Esophagus muscularis mucosa (tissue), 4 donors: ENCODE measurements at regions of chr12 and their contacts with region 1.

Region 1: DNA sequence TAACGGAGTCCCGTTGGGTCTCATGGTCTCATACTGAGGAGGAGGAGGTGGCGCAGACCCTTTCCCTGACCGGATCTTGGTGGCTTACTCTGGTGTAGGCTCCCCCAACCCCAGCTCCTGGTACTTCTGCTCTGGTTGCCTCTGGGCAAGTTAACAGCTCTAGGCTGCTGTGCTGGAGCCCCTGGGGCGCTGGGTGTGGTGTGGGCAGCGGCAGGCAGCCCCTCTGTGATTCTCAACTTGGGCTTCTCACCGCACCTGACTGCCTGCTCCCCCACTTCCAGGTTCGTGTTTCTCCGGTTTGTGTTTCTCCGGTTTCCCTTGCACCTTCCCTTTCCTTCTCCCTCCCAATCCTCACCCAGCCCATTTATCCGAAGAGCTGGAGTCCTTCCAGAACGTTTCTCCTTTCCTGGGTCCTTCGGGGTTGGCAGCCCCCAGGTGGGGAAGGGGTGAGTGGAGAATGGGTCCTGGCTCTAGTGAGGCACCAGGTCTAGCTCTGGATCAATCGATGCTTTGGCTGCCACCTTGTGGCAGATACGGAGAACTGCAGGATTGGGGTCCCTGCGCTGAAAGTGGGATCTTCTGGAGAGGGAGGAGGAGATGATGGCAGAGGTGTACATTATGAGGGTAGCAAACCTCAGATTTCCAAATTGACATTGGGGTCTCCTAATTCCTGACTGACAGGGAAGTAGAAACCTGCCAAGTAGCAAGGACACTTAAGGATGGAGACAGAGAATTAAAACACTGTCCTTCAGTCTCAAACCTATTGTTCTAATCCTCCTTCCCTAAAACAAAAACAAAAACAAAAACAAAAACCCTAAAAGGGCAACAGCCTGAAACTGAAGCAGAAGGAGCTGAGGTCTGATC is 8.3 kb downstream of the CISTR start:
- DNase-seq: no peak
- H3K4me3 ChIP-seq: no peak overlapping the region
- H3K27ac ChIP-seq: no peak overlapping the region
- H3K4me1 ChIP-seq: peaks cover 15 to 36% (median 32%) of the 10 kb centered on the region in 4 donors
- H3K27me3 ChIP-seq: peaks cover 0 to 79% (median 51%) of the 10 kb centered on the region in 4 donors
- CTCF ChIP-seq: peak in 2 of 3 experiments; percentile 93 to 96
- EP300 ChIP-seq: no peak
- POLR2A ChIP-seq: no peak

Region 2: GRCh38 chr12:53701518-53702260 is 41.8 kb before region 1 on chr12:
- intact Hi-C with region 1: loop called (anchors 2 kb)
- DNase-seq: peak; percentile 95
- H3K4me3 ChIP-seq: no peak overlapping the region
- H3K27ac ChIP-seq: no peak overlapping the region
- H3K4me1 ChIP-seq: peaks cover 2 to 7% (median 4%) of the 10 kb centered on the region in 4 donors
- H3K27me3 ChIP-seq: peaks cover under 1 to 96% (median 34%) of the 10 kb centered on the region in 4 donors
- CTCF ChIP-seq: peak; percentile 89 to 91 (median 89)
- EP300 ChIP-seq: no peak
- POLR2A ChIP-seq: no peak